Activated naive CD4-positive, alpha-beta T cell treated with anti-CD3 and anti-CD28 coated beads for 36 hours (primary cell): ENCODE measurements at regions of chr5 and their contacts with region 1.

Region 1: GRCh38 chr5:139517683-139518564 is 35.4 kb upstream of the STING1 start:
- DNase-seq: peak; percentile 92
- H3K4me3 Mint-ChIP-seq: peak overlapping the region; percentile 92
- H3K27ac Mint-ChIP-seq: peak overlapping the region; percentile 91
- H3K4me1 Mint-ChIP-seq: peaks cover 26% of the 10 kb centered on the region
- H3K27me3 Mint-ChIP-seq: no peaks in the 10 kb centered on the region

Region 2: DNA sequence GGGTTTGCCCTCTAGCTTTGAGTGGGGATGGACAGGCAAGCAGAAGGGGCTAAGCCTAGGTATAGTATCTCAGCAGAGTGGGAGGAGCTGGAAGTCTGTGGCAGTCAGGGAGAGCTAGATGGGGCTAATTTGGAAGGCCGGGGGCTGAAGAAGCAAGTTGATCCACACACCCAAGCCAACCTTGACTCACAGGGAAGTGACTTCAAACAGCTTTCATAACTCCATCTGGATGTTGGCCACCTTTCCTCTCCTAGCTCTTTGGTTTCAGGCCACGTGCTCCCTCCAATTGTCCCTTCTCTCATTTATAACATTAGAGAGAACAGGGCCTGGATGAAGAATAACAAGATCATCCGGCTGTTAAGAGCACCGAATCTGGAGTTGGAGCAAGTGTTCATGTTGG is 1015.8 kb before region 1 on chr5:
- CTCF ChIA-PET with region 1: no interaction called
- intact Hi-C with region 1: no loop called
- DNase-seq: no peak
- H3K4me3 Mint-ChIP-seq: no peak overlapping the region
- H3K27ac Mint-ChIP-seq: no peak overlapping the region
- H3K4me1 Mint-ChIP-seq: no peaks in the 10 kb centered on the region
- H3K27me3 Mint-ChIP-seq: no peaks in the 10 kb centered on the region

Region 3: DNA sequence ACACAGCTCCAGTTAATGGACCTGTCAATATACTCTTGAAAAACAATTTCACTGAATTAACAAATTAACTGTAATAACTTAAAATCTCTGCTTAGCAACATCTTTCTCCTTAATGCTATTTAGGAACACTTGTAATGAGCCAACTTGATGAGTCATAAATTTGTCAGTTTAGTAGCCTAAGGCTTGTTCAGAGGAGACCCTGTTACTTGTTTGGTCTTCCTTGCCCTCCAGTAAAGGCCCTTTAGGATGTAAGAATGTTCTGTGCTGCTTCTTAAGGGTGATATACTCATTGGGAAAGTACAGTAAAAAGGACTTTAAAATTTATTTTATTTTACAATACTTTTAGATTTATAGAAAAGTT is 235.7 kb before region 1 on chr5:
- CTCF ChIA-PET with region 1: no interaction called
- intact Hi-C with region 1: no loop called
- DNase-seq: no peak
- H3K4me3 Mint-ChIP-seq: no peak overlapping the region
- H3K27ac Mint-ChIP-seq: no peak overlapping the region
- H3K4me1 Mint-ChIP-seq: peaks cover 34% of the 10 kb centered on the region
- H3K27me3 Mint-ChIP-seq: no peaks in the 10 kb centered on the region

Region 4: GRCh38 chr5:139417214-139417613 is 100.7 kb before region 1 on chr5:
- CTCF ChIA-PET with region 1: interaction called, 326 read pairs
- intact Hi-C with region 1: loop called (anchors 1 kb)
- DNase-seq: no peak
- H3K4me3 Mint-ChIP-seq: no peak overlapping the region
- H3K27ac Mint-ChIP-seq: no peak overlapping the region
- H3K4me1 Mint-ChIP-seq: peaks cover 50% of the 10 kb centered on the region
- H3K27me3 Mint-ChIP-seq: no peaks in the 10 kb centered on the region

Region 5: DNA sequence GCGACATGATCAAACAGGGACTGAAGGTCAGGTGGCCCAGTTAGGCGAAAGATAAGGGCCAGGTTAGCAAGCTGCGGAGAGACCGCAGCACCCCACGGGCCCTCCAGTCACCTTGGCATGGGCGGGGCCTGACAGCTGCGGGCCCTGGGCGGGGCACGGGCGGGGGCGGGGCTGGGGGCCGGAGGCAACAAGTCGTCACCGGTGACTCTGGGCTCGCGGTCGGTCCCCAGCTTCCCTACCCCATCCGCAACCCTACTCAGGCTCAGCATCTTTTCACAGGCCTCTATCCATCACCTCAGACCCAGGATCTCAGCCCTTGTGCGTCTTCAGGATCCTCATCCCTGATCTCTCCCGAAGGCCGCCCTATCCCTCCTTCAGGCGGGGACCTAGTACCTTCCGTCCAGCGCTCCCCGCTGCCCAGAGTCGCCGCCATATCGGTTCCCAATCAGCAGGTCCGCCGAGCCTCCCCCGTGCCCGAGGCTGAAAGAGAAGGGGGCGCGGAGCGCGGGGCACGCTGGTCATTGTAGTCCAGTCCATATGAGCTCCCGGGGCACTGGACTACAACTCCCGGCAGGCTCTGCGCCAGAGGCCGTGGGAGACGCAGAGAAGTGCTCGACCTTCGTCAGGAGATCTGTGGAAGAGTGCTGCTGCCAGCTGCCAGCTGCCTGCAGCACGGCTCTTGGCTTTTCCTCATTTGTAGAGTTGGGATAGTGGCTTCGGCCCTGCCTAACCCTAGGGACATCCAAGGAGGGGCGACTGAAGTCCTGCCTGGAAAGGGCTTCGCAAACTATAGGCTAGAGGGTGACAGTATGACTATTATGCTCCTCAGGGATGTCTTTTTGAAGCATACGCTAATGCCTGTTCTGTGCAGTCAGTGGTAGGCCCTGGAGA is 78.7 kb before region 1 on chr5 and contains the start of gene DNAJC18:
- CTCF ChIA-PET with region 1: interaction called, 26 read pairs
- intact Hi-C with region 1: no loop called
- DNase-seq: peak; percentile 94
- H3K4me3 Mint-ChIP-seq: peak within 1 kb of the TSS; percentile 95
- H3K27ac Mint-ChIP-seq: peak within 1 kb of the TSS; percentile 98
- H3K4me1 Mint-ChIP-seq: peaks cover 42% of the 10 kb centered on the region
- H3K27me3 Mint-ChIP-seq: no peaks in the 10 kb centered on the region
- total RNA-seq, gene DNAJC18: 18.1 to 18.8 TPM

Region 6: GRCh38 chr5:139482050-139482889 is 35.7 kb before region 1 on chr5 and contains the start of gene STING1:
- CTCF ChIA-PET with region 1: interaction called, 37 read pairs
- intact Hi-C with region 1: loop called (anchors 1 kb)
- DNase-seq: peak; percentile 90
- H3K4me3 Mint-ChIP-seq: peak within 1 kb of the TSS; percentile 100
- H3K27ac Mint-ChIP-seq: peak within 1 kb of the TSS; percentile 100
- H3K4me1 Mint-ChIP-seq: peaks cover 46% of the 10 kb centered on the region
- H3K27me3 Mint-ChIP-seq: no peaks in the 10 kb centered on the region
- total RNA-seq, gene STING1: 136 to 140 TPM

Region 7: DNA sequence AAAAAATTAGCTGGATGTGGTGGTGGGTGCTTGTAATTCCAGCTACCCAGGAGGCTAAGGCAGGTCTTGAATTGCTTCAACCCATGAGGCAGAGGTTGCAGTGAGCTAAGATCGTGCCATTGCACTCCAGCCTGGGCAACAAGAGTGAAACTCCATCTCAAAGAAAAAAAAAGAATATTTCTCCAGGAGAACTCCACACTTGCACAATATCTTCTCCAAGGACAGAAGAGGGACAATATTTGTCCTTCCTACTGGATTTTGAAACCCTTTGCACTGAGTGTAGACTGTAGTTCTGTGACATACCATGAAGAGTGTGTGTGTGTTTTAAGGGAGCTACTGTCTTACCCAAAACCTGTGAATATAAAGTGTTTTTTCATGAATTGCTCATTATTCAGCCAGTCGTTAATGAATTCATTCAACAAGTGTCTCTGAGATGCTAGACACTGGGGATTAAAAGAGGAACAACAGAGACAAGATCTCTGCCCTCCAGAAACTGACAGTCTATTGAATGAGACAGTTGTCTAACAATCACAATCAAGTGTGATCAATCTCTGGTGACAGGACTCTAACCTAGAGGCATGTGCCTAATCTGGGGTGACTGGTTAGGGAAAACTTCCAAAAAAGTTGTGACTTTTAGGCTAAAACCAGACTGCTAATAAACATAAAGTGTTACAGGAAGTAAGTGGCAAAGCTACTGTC is 33.4 kb after region 1 on chr5:
- CTCF ChIA-PET with region 1: no interaction called
- intact Hi-C with region 1: no loop called
- DNase-seq: no peak
- H3K4me3 Mint-ChIP-seq: no peak overlapping the region
- H3K27ac Mint-ChIP-seq: no peak overlapping the region
- H3K4me1 Mint-ChIP-seq: peaks cover 2% of the 10 kb centered on the region
- H3K27me3 Mint-ChIP-seq: no peaks in the 10 kb centered on the region

Region 8: GRCh38 chr5:139690064-139690802 is 172.3 kb after region 1 on chr5:
- CTCF ChIA-PET with region 1: no interaction called
- intact Hi-C with region 1: loop called (anchors 1 kb)
- DNase-seq: peak; percentile 41
- H3K4me3 Mint-ChIP-seq: no peak overlapping the region
- H3K27ac Mint-ChIP-seq: no peak overlapping the region
- H3K4me1 Mint-ChIP-seq: peaks cover 2% of the 10 kb centered on the region
- H3K27me3 Mint-ChIP-seq: no peaks in the 10 kb centered on the region

Region 9: DNA sequence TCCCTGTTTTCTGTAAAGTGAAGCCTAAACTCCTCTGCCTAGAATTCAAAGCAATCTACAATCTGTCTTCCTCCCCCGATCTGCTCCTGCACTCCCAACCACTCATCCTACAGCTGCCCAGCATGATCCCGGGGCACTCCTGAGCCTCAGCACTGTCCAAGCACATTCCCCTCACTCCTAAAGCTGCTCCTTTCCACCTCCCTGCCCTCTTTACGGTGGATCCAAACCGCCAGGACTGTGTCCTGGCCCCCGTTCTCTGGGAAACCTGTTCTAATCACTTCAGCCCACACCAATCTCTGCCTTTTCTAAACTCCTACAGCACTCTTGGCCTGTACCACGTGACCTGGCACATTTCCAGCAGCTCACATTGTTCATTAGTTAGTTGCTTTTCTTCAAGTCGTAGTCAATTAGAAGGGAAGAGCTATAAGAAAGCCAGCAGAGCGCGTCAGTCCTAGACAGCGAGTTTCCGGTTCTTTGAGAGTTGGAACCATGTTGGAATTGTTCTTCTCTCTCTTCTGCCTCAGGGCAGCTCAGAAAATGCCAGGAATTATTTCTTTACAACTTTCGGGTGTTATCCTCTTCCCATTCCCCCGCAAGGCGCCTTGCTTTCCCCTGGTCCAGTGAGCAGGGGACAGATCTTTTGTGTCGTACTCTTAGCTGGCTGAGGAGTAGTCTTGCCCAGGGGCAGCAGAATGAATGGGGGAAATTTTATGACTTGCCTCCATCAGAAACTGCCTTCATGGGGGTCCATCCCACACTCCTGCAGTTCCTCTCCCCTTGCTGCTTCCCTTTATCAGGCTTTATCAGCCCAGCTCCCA is 464.4 kb after region 1 on chr5:
- CTCF ChIA-PET with region 1: no interaction called
- intact Hi-C with region 1: no loop called
- DNase-seq: no peak
- H3K4me3 Mint-ChIP-seq: no peak overlapping the region
- H3K27ac Mint-ChIP-seq: no peak overlapping the region
- H3K4me1 Mint-ChIP-seq: peaks cover 2% of the 10 kb centered on the region
- H3K27me3 Mint-ChIP-seq: peaks cover 14% of the 10 kb centered on the region